ENCODE measurements at regions of chr12 and their contacts with region 1.

Region 1: GRCh38 chr12:11553871-11554533 is 95.5 kb upstream of the ETV6 start:
- DNase-seq: no peak
- H3K4me3 ChIP-seq: no peak overlapping the region
- H3K27me3 ChIP-seq: peaks cover 13% of the 10 kb centered on the region
- CTCF ChIP-seq: peak; percentile 74

Region 2: GRCh38 chr12:11581179-11581755 is 27.3 kb after region 1 on chr12:
- CTCF ChIA-PET with region 1: interaction called, 17 read pairs
- POLR2A ChIA-PET with region 1: no interaction called
- DNase-seq: no peak
- H3K4me3 ChIP-seq: no peak overlapping the region
- H3K27me3 ChIP-seq: peaks cover 10% of the 10 kb centered on the region
- CTCF ChIP-seq: peak; percentile 27; the same call in 1 of the 2 replicates

Measured in BJ (cell line).